AG04450 (cell line): ENCODE measurements at regions of chr3 and their contacts with region 1.

Region 1: DNA sequence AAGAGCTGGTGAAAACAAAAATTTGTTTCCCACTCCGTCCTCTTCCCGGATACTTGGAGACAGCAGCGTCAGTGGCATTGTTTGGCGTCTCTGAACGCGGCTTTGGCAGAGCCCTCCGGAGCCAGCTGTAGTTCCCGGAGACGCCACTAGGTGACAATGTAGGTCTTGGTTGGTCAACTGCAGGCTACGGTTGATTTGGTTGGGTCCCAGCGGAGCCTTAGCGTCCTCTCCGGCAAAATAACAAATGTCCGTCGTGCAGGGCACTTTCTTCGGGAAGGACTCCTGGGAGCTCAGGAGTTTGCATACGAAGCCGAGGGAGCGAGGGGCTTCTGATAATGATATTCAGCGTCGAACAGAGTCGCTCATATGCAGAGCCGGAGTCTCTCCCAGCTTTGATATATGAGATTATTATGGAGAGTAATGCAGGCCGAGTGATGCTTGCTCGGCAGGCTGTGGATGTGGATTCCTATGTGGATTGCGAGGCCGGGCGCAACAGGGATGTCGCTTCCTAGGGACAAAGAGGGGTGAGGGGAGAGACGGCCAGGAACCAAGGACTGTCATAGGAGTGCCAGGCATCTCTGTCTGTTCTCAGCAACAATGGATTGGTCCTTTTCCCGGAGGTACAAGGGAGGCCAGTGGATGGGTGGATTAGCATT is 74.8 kb downstream of the IL20RB start:
- DNase-seq: peak; percentile 32
- H3K4me3 ChIP-seq: peak overlapping the region; percentile 58
- H3K27ac ChIP-seq: no peak overlapping the region
- H3K27me3 ChIP-seq: peaks cover 8% of the 10 kb centered on the region
- CTCF ChIP-seq: peak; percentile 95

Region 2: DNA sequence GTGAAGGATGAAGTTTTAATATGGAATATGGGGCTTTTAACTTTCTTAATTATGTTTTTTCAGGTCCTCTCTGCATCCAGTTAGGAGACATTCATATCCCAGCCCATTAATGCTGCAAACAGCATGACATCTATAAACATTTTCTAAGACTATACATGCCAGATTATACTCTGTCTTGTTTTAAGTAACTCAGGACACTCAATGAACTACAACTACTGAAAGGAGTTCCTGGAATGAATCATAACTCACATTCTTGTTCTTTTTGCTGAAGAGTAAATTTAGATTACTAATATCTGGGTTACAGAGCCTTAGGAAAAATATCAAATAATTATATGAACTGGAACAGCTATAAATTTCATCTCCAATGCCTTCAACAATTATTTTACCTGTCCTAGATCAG is 447.9 kb before region 1 on chr3:
- CTCF ChIA-PET with region 1: no interaction called
- POLR2A ChIA-PET with region 1: no interaction called
- DNase-seq: no peak
- H3K4me3 ChIP-seq: no peak overlapping the region
- H3K27ac ChIP-seq: no peak overlapping the region
- H3K27me3 ChIP-seq: no peaks in the 10 kb centered on the region
- CTCF ChIP-seq: no peak

Region 3: DNA sequence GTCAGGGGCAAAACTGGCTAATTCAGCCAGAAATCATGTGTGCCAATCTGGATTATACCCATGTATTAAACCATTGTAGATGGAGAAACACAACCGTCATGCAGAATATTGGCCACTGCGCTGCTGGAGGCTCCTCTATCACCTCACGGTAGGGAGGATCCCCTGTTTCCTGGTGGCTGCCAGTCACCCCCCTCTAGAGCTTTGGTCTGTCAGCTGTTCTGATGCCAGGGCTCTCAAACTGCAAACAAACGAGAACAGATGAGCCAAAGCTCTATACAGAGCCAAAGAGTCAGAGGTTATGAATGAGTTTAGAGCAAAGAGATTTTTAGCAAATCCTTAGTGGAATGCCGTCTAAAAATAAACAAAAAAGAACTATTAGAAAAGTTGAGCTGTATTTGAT is 12.3 kb before region 1 on chr3:
- CTCF ChIA-PET with region 1: interaction called, 23 read pairs
- POLR2A ChIA-PET with region 1: no interaction called
- DNase-seq: no peak
- H3K4me3 ChIP-seq: no peak overlapping the region
- H3K27ac ChIP-seq: no peak overlapping the region
- H3K27me3 ChIP-seq: peaks cover 2% of the 10 kb centered on the region
- CTCF ChIP-seq: no peak

Region 4: DNA sequence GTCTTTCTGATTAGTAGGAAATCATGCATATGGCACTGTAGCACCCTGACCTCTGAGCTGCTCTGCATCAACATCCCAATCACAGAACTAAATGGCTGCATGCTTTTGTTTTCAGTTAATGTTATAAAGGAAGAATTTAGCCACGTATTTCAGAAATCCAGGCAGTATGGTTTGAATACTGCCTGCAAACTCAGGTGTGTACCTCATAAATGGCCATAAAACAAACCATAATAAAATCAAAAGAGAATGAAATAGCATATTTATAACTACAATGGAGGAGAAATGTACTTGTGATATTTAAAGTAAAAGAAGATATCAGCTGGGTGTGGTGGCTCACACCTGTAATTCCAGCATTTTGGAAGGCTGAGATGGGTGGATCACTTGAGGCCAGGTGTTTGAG is 19.7 kb after region 1 on chr3:
- CTCF ChIA-PET with region 1: interaction called, 10 read pairs
- POLR2A ChIA-PET with region 1: no interaction called
- DNase-seq: no peak
- H3K4me3 ChIP-seq: no peak overlapping the region
- H3K27ac ChIP-seq: no peak overlapping the region
- H3K27me3 ChIP-seq: peaks cover 13% of the 10 kb centered on the region
- CTCF ChIP-seq: no peak

Region 5: GRCh38 chr3:137105277-137105977 is 72.8 kb after region 1 on chr3:
- CTCF ChIA-PET with region 1: interaction called, 18 read pairs
- POLR2A ChIA-PET with region 1: no interaction called
- DNase-seq: peak; percentile 30
- H3K4me3 ChIP-seq: no peak overlapping the region
- H3K27ac ChIP-seq: no peak overlapping the region
- H3K27me3 ChIP-seq: peaks cover 8% of the 10 kb centered on the region
- CTCF ChIP-seq: peak; percentile 71

Region 6: DNA sequence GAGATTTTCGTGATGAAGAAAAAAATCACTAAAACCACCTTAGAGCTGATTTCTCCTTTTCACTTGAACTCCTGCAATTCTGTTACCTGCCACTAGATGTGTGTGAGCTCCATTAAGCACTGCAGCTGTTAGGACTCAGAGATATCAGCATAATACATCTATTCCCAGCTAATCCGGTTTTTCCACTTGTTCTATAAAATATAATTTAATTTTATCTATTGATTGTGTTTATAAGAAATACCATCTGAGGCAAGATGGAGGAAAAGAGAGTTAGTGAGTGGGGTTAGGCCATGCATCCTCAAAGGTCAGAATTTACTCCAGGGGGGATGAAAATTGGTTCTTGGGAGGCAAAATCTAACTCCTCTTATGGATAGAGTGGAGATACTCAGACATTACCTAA is 77.9 kb after region 1 on chr3:
- CTCF ChIA-PET with region 1: interaction called, 18 read pairs
- POLR2A ChIA-PET with region 1: no interaction called
- DNase-seq: no peak
- H3K4me3 ChIP-seq: no peak overlapping the region
- H3K27ac ChIP-seq: no peak overlapping the region
- H3K27me3 ChIP-seq: peaks cover 8% of the 10 kb centered on the region
- CTCF ChIP-seq: peak; percentile 88

Region 7: GRCh38 chr3:137946345-137946973 is 913.9 kb after region 1 on chr3:
- CTCF ChIA-PET with region 1: interaction called, 37 read pairs
- POLR2A ChIA-PET with region 1: no interaction called
- DNase-seq: peak; percentile 24
- H3K4me3 ChIP-seq: no peak overlapping the region
- H3K27ac ChIP-seq: no peak overlapping the region
- H3K27me3 ChIP-seq: no peaks in the 10 kb centered on the region
- CTCF ChIP-seq: peak; percentile 74

Region 8: GRCh38 chr3:137970914-137971831 is 938.6 kb after region 1 on chr3:
- CTCF ChIA-PET with region 1: interaction called, 13 read pairs
- POLR2A ChIA-PET with region 1: no interaction called
- DNase-seq: peak; percentile 20
- H3K4me3 ChIP-seq: no peak overlapping the region
- H3K27ac ChIP-seq: no peak overlapping the region
- H3K27me3 ChIP-seq: peaks cover 8% of the 10 kb centered on the region
- CTCF ChIP-seq: peak; percentile 94